Transverse colon (tissue), 4 donors: ENCODE measurements at regions of chr7 and their contacts with region 1.

Region 1: DNA sequence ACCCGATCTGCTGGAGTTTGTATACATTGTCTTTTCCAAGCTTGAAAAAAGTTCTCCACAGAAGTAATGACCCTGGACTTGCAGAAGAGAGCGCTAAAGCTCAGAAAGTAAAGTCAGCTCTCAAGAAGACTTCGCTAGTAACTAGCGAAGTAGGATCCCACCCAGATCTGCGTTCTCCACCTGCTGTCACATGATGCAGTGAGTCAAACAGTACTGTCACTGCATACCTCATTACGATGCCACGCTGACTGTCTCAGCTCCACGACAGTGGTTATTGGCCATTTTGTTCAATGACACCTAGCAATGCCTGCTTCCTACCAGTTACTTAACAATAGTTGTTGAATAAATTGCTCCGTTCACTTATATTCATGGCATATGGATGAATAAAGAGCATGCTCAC is 29.7 kb upstream of the SEC61G start:
- DNase-seq: peak; percentile 20
- H3K4me3 ChIP-seq: no peak overlapping the region
- H3K27ac ChIP-seq: no peak overlapping the region
- H3K4me1 ChIP-seq: peaks cover 0 to 6% (median 4%) of the 10 kb centered on the region in 4 donors
- H3K27me3 ChIP-seq: no peaks in the 10 kb centered on the region
- CTCF ChIP-seq: peak; percentile 56 to 67 (median 63)
- EP300 ChIP-seq: no peak
- POLR2A ChIP-seq: no peak

Region 2: DNA sequence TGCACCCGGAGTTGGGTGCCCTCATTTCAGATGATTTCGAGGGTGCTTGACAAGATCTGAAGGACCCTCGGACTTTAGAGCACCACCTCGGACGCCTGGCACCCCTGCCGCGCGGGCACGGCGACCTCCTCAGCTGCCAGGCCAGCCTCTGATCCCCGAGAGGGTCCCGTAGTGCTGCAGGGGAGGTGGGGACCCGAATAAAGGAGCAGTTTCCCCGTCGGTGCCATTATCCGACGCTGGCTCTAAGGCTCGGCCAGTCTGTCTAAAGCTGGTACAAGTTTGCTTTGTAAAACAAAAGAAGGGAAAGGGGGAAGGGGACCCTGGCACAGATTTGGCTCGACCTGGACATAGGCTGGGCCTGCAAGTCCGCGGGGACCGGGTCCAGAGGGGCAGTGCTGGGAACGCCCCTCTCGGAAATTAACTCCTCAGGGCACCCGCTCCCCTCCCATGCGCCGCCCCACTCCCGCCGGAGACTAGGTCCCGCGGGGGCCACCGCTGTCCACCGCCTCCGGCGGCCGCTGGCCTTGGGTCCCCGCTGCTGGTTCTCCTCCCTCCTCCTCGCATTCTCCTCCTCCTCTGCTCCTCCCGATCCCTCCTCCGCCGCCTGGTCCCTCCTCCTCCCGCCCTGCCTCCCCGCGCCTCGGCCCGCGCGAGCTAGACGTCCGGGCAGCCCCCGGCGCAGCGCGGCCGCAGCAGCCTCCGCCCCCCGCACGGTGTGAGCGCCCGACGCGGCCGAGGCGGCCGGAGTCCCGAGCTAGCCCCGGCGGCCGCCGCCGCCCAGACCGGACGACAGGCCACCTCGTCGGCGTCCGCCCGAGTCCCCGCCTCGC is 229.9 kb after region 1 on chr7 and contains the start of gene EGFR:
- in situ Hi-C with region 1: loop called in 3 of 4 experiments (anchors 25 kb)
- intact Hi-C with region 1: no loop called
- DNase-seq: peak; percentile 86
- H3K4me3 ChIP-seq: peak within 1 kb of the TSS; percentile 84 to 90 (median 88)
- H3K27ac ChIP-seq: peak within 1 kb of the TSS; percentile 96 to 97 (median 96)
- H3K4me1 ChIP-seq: peaks cover 0 to 16% (median 7%) of the 10 kb centered on the region in 4 donors
- H3K27me3 ChIP-seq: peaks cover 8% of the 10 kb centered on the region
- CTCF ChIP-seq: no peak
- EP300 ChIP-seq: no peak
- POLR2A ChIP-seq: peak; percentile 45
- total RNA-seq, gene EGFR: 40.0 to 85.7 (median 72.9) TPM

Region 3: DNA sequence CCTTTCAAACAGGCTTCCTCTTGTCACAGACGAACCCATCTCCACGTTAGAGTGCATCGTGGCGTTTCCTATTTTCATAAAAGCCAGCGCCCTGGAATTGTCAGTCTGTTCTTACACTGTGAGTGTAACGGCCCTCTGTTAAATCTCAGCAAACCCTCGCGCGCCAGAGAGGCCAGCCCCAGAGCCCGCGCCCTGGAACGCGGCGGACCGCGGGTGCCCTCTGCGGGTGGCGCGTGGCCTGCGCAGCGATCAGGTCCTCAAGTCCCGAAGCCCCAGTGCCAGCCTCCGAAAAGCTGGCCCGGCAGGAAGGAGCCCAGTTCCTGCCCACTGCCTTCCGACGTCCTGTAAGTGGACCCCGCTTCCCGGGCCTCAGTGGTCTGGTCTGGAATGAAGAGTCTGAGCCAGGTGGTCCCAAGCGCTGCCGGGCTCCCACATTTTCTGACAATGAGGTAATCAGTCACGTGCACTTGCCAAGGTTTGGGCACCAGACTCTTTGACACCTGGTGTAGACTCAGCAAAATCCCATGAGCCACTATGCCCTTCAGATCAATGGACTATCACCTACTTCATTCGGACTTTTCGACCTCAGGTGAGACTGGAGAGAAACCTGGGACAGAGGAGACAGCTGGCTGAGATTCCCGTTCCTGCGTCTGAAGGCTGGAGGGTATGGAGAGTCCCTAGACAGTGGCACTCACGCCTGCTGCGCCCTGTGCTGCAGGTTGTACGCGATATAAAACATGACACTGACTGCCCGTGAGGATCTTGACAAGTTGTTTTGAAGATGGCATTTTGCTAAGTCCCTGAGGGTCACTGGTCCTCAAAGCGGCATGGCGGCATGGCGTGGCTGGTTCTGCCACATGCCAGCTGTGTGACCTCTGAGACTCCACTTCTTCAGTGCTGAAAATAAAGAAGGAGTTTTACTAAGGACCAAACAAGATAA is 467.1 kb after region 1 on chr7:
- in situ Hi-C with region 1: loop called in 2 of 4 experiments (anchors 10 kb)
- intact Hi-C with region 1: loop called (anchors 5 kb)
- DNase-seq: peak; percentile 87
- H3K4me3 ChIP-seq: peak overlapping the region; percentile 37 to 66 (median 54)
- H3K27ac ChIP-seq: peak overlapping the region; percentile 33 to 64 (median 40)
- H3K4me1 ChIP-seq: peaks cover 7 to 16% (median 15%) of the 10 kb centered on the region in 4 donors
- H3K27me3 ChIP-seq: peaks cover 35% of the 10 kb centered on the region
- CTCF ChIP-seq: peak; percentile 86 to 88 (median 87)
- EP300 ChIP-seq: no peak
- POLR2A ChIP-seq: no peak

Region 4: DNA sequence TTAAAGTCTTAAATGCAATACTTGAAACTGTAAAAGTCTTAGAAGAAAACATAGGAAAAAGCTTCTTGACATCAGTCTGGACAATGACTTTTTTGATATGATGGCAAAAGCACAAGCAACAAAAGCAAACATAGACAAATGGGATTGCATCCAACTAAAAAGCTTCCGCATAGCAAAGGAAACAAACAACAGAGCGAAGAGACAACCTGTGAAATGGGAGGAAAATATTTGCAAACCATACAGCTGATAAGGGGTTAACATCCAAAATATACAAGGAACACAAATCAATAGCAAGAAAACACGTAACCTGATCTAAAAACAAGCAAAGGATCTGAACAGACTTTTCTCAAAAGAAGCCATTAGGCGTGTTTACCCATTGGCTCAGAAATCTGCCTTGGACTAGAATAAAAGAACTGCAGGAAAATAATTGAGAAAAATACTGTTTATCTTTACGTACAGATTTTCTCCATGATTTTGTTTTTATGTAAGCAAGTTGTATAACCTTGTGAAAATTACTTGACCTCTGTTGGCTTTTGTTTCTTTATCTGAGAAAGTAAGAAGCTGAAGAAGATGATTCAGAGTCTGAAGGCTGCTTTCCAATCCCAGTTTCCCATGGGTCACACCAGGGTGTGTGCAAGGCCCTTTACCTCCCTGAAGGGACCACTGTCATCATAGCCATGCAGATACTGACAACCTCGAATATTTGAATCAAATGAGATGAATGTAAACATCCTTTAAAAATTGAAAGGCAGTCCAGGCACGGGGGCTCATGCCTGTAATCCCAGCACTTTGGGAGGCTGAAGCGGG is 477.4 kb after region 1 on chr7:
- in situ Hi-C with region 1: loop called in 1 of 4 experiments (anchors 10 kb)
- intact Hi-C with region 1: no loop called
- DNase-seq: no peak
- H3K4me3 ChIP-seq: no peak overlapping the region
- H3K27ac ChIP-seq: no peak overlapping the region
- H3K4me1 ChIP-seq: no peaks in the 10 kb centered on the region
- H3K27me3 ChIP-seq: no peaks in the 10 kb centered on the region
- CTCF ChIP-seq: no peak
- EP300 ChIP-seq: no peak
- POLR2A ChIP-seq: no peak